ENCODE measurements at regions of chr17 and their contacts with region 1.

Region 1: DNA sequence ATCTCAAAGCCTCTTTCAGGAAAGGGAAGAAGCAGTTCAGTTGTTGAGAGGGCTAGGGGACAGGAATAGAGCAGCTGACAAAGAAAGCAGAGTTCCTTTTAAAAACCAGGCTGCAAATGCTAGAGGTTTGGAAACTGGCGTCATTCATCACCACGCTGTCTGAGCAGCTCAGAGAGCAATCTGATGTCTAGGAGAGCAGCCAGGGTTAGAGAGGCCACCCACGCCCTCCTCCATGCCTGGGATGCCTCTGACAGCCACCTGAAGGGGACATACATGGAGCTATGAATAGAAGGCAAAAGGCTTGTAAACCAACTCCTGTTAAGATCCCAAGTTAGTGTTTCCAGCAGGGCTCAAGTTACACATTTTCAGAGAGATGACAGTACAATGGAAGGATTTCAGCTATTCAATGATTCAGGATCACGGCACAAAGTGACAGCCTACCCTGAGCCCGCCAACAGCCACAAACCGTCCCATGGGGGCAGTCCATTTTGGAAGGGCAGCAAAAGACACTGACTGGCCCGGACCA is 12.4 kb downstream of the RAB5C start:
- DNase-seq: no peak
- H3K4me3 ChIP-seq: no peak overlapping the region
- H3K27ac ChIP-seq: peak overlapping the region in 1 of 2 experiments; percentile 19
- H3K4me1 ChIP-seq: peaks cover 0 to 10% (median 1%) of the 10 kb centered on the region in 4 experiments
- H3K27me3 ChIP-seq: no peaks in the 10 kb centered on the region

Region 2: DNA sequence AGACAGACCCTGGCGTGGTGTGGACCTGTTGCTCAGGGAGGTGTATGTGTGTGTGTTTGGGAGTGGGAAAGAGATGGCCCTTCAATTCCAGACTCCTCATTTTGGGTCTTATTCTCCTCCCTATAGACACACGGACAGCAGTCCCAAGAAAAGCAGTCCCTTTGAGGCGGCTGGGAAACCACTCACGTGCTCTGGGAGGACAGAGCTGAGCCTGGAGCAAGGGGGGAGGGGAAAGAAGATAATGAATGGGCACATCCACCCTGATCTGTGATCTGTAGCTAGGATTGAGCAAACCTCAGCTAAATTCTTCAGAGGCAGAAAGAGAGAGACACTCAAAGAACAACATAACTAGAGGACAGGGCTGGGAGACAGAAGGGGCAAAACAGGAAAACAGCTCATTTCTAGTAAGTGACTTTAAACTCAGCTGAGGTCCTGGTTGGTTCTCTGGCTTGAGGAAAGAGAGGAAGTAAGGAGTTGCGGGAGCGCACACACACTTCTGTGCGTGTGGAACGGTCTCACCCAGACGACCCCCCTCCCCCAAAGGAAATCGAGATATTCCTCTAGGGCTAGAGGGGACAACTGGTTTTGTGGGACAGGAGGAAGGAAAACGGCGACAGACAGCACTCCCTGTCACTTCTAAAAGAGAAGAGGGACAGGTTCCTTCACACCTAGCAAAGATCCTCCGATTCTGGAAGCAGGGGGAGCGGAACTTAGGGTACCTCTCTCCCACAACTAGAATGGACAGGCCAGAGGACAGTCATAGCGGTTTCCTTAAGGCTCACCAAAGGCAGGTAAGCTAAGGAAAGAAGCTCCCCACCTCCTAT is 11.7 kb after region 1 on chr17:
- CTCF ChIA-PET with region 1: interaction called, 10 read pairs
- POLR2A ChIA-PET with region 1: interaction called, 4 read pairs
- DNase-seq: peak; percentile 53 to 63 (median 61)
- H3K4me3 ChIP-seq: peak overlapping the region; percentile 73 to 98 (median 95)
- H3K27ac ChIP-seq: peak overlapping the region; percentile 92 to 95
- H3K4me1 ChIP-seq: peaks cover 8 to 15% (median 14%) of the 10 kb centered on the region in 4 experiments
- H3K27me3 ChIP-seq: no peaks in the 10 kb centered on the region

Region 3: GRCh38 chr17:42347198-42347597 is 204.8 kb after region 1 on chr17:
- CTCF ChIA-PET with region 1: no interaction called
- POLR2A ChIA-PET with region 1: no interaction called
- DNase-seq: no peak
- H3K4me3 ChIP-seq: no peak overlapping the region
- H3K27ac ChIP-seq: no peak overlapping the region
- H3K4me1 ChIP-seq: peaks cover 0 to 7% (median 5%) of the 10 kb centered on the region in 4 experiments
- H3K27me3 ChIP-seq: no peaks in the 10 kb centered on the region

Measured in common myeloid progenitor, CD34-positive (primary cell).